ENCODE measurements at regions of chr2 and their contacts with region 1.

Region 1: GRCh38 chr2:94997981-94998930 is 27.3 kb upstream of the MAL start:
- DNase-seq: peak; percentile 64 to 75
- H3K4me3 ChIP-seq: peak overlapping the region; percentile 44; the same call in 1 of the 2 replicates
- H3K27ac ChIP-seq: no peak overlapping the region
- H3K4me1 ChIP-seq: no peaks in the 10 kb centered on the region
- H3K27me3 ChIP-seq: peaks cover 16% of the 10 kb centered on the region; the same call in 1 of the 2 replicates
- CTCF ChIP-seq: no peak

Region 2: GRCh38 chr2:95071856-95072255 is 73.6 kb after region 1 on chr2:
- CTCF ChIA-PET with region 1: no interaction called
- POLR2A ChIA-PET with region 1: no interaction called
- intact Hi-C with region 1: no loop called
- DNase-seq: peak in 1 of 2 experiments; percentile 22
- H3K4me3 ChIP-seq: no peak overlapping the region
- H3K27ac ChIP-seq: no peak overlapping the region
- H3K4me1 ChIP-seq: peaks cover 19% of the 10 kb centered on the region
- H3K27me3 ChIP-seq: no peaks in the 10 kb centered on the region
- CTCF ChIP-seq: no peak

Region 3: DNA sequence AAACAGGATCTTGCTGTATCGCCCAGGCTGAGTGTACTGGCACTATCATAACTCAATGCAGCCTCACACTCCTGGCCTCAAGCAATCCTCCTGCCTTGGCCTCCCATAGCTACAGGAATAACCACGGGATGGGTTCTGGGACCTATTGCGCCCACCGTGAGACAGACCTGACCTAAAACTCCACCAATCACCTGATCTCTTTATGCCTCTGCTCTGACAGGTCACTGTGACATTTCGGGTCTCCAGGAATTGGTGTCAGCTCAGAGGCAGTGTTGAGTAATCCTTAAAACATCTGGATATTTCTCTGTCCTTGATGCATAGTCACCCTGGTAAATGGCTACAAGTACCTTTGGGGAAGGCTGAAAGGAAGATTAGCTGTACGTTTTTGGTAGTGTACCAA is 128.5 kb after region 1 on chr2:
- CTCF ChIA-PET with region 1: no interaction called
- POLR2A ChIA-PET with region 1: interaction called, 14 read pairs
- intact Hi-C with region 1: no loop called
- DNase-seq: no peak
- H3K4me3 ChIP-seq: no peak overlapping the region
- H3K27ac ChIP-seq: no peak overlapping the region
- H3K4me1 ChIP-seq: peaks cover 5% of the 10 kb centered on the region
- H3K27me3 ChIP-seq: peaks cover 31% of the 10 kb centered on the region
- CTCF ChIP-seq: no peak

Measured in PC-9 (cell line).